A549 (cell line): ENCODE measurements at regions of chr12 and their contacts with region 1.

Region 1: DNA sequence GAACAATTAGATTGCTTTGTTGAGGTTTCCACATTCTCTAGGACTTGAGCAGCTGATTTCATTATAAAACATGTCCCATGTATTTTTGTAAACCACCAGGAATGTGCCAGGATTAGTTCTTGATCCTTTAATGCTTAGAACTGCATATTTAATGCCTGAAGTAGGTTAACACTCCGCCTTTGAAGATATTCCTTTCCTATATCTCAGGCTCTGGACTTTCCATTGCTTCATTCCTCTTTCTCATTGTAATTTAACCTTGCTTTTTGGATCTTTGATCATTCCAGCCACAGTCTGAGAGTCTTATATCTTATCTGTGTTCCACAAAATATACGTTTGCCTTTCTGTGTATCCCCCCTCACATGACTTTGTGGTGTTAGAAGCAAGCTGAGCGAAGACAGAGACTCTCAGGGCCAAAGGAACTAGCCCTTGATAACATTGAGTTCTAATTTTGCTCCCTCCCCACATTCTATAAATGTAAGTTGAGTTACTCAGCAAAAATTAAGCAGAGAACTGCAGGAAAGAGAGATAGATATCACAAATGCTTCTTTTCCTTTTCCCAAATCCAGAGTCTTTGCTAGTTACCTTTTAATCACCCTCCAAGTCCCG is 2.4 kb upstream of the CLEC1B start:
- DNase-seq: no peak
- ATAC-seq: no peak
- H3K4me3 ChIP-seq: no peak overlapping the region
- H3K27ac ChIP-seq: no peak overlapping the region
- H3K4me1 ChIP-seq: no peaks in the 10 kb centered on the region
- CTCF ChIP-seq: no peak
- EP300 ChIP-seq: no peak
- POLR2A ChIP-seq: no peak
- RAD21 ChIP-seq: no peak

Region 2: DNA sequence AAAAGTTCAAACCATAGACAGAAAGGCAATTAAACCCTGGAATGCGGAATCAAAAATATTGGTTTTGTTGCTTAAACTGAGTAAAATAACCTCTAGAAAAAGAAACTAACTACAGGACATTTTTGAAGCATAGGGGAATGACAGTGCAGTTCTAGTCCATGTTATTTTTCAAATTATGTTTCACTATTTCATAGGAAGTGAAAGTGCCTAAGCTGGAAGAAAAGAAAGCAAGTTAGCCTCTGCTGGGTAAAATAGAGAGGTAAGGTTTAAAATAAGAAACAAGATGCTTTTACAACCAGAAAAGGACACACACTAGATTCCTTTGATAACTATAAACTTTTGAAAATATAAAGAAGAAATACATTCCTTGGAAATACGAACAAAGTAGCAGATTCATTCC is 269.5 kb before region 1 on chr12:
- CTCF ChIA-PET with region 1: no interaction called
- POLR2A ChIA-PET with region 1: no interaction called
- DNase-seq: no peak
- ATAC-seq: no peak
- H3K4me3 ChIP-seq: no peak overlapping the region
- H3K27ac ChIP-seq: no peak overlapping the region
- H3K4me1 ChIP-seq: no peaks in the 10 kb centered on the region
- CTCF ChIP-seq: no peak
- EP300 ChIP-seq: no peak
- POLR2A ChIP-seq: no peak
- RAD21 ChIP-seq: no peak

Region 3: GRCh38 chr12:10016881-10017280 is 15.6 kb after region 1 on chr12:
- CTCF ChIA-PET with region 1: interaction called, 19 read pairs
- POLR2A ChIA-PET with region 1: no interaction called
- DNase-seq: peak; percentile 7 to 54
- ATAC-seq: no peak; a peak in 1 of 6 replicates
- H3K4me3 ChIP-seq: no peak overlapping the region
- H3K27ac ChIP-seq: peak overlapping the region; percentile 27 to 58; a peak in 3 of 6 replicates
- H3K4me1 ChIP-seq: peaks cover 7% of the 10 kb centered on the region; the same call in 2 of the 3 replicates
- CTCF ChIP-seq: no peak
- EP300 ChIP-seq: no peak
- POLR2A ChIP-seq: no peak
- RAD21 ChIP-seq: no peak